Ovary (tissue), 10 donors: ENCODE measurements at regions of chr12 and their contacts with region 1.

Region 1: GRCh38 chr12:128387811-128388422 is 120.9 kb downstream of the TMEM132C start:
- DNase-seq: peak; percentile 41 to 69 (median 44)
- H3K4me3 ChIP-seq: no peak overlapping the region
- H3K27ac ChIP-seq: peak overlapping the region; percentile 10 to 30
- H3K4me1 ChIP-seq: no peaks in the 10 kb centered on the region
- H3K27me3 ChIP-seq: no peaks in the 10 kb centered on the region
- CTCF ChIP-seq: peak in 1 of 3 donors; percentile 44
- EP300 ChIP-seq: no peak
- POLR2A ChIP-seq: no peak

Region 2: DNA sequence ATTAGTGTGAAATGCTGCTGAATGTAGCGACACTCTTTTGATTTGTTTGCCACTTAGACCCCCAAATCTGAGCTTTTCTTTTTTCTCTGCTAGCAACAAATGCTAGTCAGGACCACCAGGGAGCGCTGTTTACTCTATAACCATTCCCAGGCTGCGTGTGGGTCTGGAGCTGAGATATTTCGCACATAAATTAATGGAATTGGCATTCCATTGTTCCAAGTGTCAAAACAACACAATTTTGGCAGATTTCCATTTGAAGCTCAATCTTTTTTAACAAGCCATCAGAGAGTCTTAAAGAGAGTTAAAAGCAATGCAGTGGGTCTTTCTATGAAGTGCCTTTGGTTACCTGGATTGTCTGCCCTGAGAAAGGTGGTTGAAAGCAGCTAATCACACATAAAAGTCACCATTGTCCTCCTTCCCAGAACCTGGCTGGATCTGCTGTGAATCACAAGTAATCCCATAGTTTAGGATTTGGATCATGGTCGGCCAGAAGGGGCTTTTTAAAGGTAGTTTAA is 128.3 kb before region 1 on chr12:
- intact Hi-C with region 1: loop called in 2 of 4 experiments (anchors 10 kb)
- DNase-seq: peak; percentile 21 to 47 (median 36)
- H3K4me3 ChIP-seq: no peak overlapping the region
- H3K27ac ChIP-seq: no peak overlapping the region
- H3K4me1 ChIP-seq: no peaks in the 10 kb centered on the region
- H3K27me3 ChIP-seq: no peaks in the 10 kb centered on the region
- CTCF ChIP-seq: peak; percentile 14 to 79 (median 30)
- EP300 ChIP-seq: no peak
- POLR2A ChIP-seq: no peak

Region 3: DNA sequence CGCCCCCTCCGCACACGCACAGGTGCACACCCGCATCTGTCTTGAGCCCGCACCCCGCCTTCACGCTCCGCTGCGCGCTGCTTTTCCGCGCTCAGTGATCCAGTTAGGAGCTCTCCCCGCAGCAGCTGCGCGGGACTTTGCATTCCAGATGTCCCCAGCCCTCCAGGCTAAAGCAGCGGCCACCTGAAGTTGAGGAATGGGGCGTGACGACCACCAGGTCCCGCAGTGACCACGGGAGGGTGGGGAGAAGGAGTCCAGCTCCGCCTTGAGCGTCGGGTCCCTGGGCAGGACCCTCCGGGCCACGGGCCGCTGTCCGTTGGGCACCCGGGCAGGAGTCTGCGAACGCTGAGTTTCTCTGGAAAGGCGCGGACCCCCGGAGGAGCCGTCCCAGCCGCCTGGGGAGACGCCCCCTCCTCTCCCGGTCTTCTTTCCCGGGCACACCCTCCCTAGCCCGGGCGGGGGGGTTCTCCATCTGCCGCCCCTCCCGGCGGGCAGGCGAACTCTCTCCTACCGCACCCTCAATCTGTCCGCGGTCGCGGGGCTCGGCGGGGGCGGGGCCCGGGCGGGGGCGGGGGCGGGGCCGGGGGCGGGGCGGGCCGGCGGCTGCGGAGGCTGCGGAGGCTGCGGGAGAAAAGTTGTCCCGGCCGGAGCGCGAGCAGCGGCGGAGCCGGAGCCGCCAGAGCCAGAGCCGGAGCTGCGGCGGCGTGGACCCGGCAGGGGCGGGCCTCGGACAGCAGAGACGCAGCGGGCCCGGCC is 121.2 kb before region 1 on chr12 and contains the start of gene TMEM132C:
- intact Hi-C with region 1: loop called in 3 of 4 experiments (anchors 5 to 10 kb)
- DNase-seq: peak in 3 of 5 donors; percentile 17 to 47 (median 20)
- H3K4me3 ChIP-seq: peak within 1 kb of the TSS; percentile 42
- H3K27ac ChIP-seq: no peak within 1 kb of the TSS
- H3K4me1 ChIP-seq: no peaks in the 10 kb centered on the region
- H3K27me3 ChIP-seq: no peaks in the 10 kb centered on the region
- CTCF ChIP-seq: no peak
- EP300 ChIP-seq: no peak
- POLR2A ChIP-seq: no peak
- total RNA-seq, gene TMEM132C: 1.6 to 38.4 (median 13.2) TPM

Region 4: GRCh38 chr12:128442096-128442495 is 54.2 kb after region 1 on chr12:
- intact Hi-C with region 1: no loop called
- DNase-seq: no peak
- H3K4me3 ChIP-seq: no peak overlapping the region
- H3K27ac ChIP-seq: no peak overlapping the region
- H3K4me1 ChIP-seq: no peaks in the 10 kb centered on the region
- H3K27me3 ChIP-seq: no peaks in the 10 kb centered on the region
- CTCF ChIP-seq: no peak
- EP300 ChIP-seq: no peak
- POLR2A ChIP-seq: no peak